H1 (cell line): ENCODE measurements at regions of chr22 and their contacts with region 1.

Region 1: DNA sequence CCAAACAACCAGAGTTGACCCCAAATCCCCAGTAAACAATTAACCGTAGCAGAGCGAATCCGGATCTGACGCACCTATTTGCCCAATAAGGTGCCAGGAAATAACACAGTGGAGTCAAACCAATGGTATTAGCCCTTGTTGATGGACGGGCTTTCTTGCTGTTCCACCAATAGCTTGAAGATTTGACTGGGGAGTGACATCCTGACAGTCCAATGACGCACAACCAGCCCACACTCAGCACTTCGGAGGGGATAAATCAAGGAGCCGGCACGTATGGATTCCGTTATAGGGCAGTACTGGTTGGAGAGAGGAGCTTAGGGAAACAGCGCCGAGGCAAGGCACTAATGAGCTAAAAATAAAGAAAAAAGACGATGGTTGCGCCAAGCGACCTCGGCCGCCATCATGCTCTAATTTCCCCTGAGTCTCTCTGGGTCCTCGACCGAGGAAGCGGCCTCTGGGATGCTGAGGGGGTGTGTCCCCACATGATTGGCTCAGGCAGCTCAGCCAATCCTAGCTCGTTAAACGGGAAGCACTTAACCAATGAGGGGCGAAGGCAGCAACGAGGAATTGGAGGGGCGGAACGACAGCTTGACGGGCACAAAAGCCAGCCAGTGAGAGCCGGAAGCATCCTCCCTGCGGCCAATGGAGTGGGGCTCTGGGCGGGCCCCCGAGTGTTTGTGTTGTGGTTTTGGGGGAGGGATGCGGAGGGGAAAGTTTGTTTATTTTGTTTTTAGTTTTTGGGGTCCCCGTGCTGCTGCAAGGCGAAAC is 49.5 kb downstream of the FAM83F start:
- DNase-seq: peak; percentile 97 to 99
- H3K4me3 ChIP-seq: peak overlapping the region; percentile 68 to 93 (median 84)
- H3K27ac ChIP-seq: peak overlapping the region; percentile 94
- H3K4me1 ChIP-seq: peaks cover 0 to 7% (median 2%) of the 10 kb centered on the region in 4 experiments; a peak in 3 of 7 replicates
- H3K27me3 ChIP-seq: peaks cover 0 to 4% (median 2%) of the 10 kb centered on the region in 4 experiments; a peak in 2 of 7 replicates
- CTCF ChIP-seq: no peak; a peak in 1 of 4 replicates
- EP300 ChIP-seq: no peak
- POLR2A ChIP-seq: peak; percentile 95 to 97
- RAD21 ChIP-seq: no peak

Region 2: GRCh38 chr22:39868741-39869140 is 175.5 kb before region 1 on chr22:
- CTCF ChIA-PET with region 1: no interaction called
- POLR2A ChIA-PET with region 1: no interaction called
- DNase-seq: no peak
- H3K4me3 ChIP-seq: no peak overlapping the region
- H3K27ac ChIP-seq: no peak overlapping the region
- H3K4me1 ChIP-seq: no peaks in the 10 kb centered on the region
- H3K27me3 ChIP-seq: no peaks in the 10 kb centered on the region
- CTCF ChIP-seq: no peak
- EP300 ChIP-seq: no peak
- POLR2A ChIP-seq: no peak
- RAD21 ChIP-seq: no peak

Region 3: DNA sequence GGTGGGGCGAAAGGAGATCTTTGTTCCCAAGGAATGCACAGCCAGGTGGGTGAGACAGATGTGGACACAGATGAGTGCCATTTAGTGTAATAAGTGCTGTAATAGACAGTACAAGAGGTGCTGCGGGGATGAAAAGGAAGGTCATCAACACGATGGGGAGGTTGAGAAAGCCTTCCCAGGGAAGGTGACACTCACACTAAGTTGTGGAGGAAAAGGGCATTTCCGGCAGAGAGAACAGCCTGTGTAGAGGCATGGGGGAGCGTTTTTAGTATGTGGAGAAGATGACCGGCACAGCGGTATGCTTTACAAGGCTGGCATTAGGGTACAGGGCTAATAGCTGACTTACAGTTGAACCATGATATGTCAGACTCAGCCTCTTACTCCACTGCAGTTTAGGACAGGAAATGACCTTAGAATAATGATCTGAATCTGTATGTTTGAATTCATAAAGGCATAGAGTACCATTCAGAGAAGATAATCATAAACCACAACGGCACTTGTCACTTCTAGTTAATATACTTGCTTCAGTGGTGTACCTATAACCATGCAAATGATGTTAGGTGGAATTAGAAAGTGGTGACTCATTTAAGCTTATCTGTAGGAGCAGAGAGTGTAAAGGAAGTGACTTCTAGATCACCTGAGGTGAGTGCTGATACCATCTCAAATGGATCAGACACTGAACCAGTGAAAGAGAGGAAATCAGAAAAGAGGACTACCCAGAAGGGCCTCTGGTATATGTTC is 11.0 kb after region 1 on chr22:
- CTCF ChIA-PET with region 1: interaction called, 3 read pairs
- POLR2A ChIA-PET with region 1: interaction called, 29 read pairs
- DNase-seq: no peak
- H3K4me3 ChIP-seq: no peak overlapping the region
- H3K27ac ChIP-seq: no peak overlapping the region
- H3K4me1 ChIP-seq: peaks cover 5 to 24% (median 10%) of the 10 kb centered on the region in 4 experiments
- H3K27me3 ChIP-seq: no peaks in the 10 kb centered on the region
- CTCF ChIP-seq: no peak
- EP300 ChIP-seq: no peak
- POLR2A ChIP-seq: no peak
- RAD21 ChIP-seq: no peak

Region 4: GRCh38 chr22:40128989-40129388 is 84.7 kb after region 1 on chr22:
- CTCF ChIA-PET with region 1: no interaction called
- POLR2A ChIA-PET with region 1: no interaction called
- DNase-seq: no peak
- H3K4me3 ChIP-seq: no peak overlapping the region
- H3K27ac ChIP-seq: no peak overlapping the region; the same call in 1 of the 2 replicates
- H3K4me1 ChIP-seq: no peaks in the 10 kb centered on the region; a peak in 1 of 7 replicates
- H3K27me3 ChIP-seq: no peaks in the 10 kb centered on the region
- CTCF ChIP-seq: no peak
- EP300 ChIP-seq: no peak
- POLR2A ChIP-seq: no peak
- RAD21 ChIP-seq: no peak

Region 5: GRCh38 chr22:40156001-40156516 is 111.8 kb after region 1 on chr22:
- CTCF ChIA-PET with region 1: no interaction called
- POLR2A ChIA-PET with region 1: no interaction called
- DNase-seq: peak; percentile 19 to 51
- H3K4me3 ChIP-seq: no peak overlapping the region
- H3K27ac ChIP-seq: no peak overlapping the region
- H3K4me1 ChIP-seq: 0 out of 7 replicates have a peak, but pooled peaks cover 0 to 4% (median 0%) of the 10 kb centered on the region in 4 experiments
- H3K27me3 ChIP-seq: no peaks in the 10 kb centered on the region
- CTCF ChIP-seq: peak in 2 of 3 experiments; percentile 28 to 51; a peak in 1 of 4 replicates
- EP300 ChIP-seq: no peak
- POLR2A ChIP-seq: no peak
- RAD21 ChIP-seq: peak; percentile 49 to 60

Region 6: GRCh38 chr22:40177738-40178416 is 133.6 kb after region 1 on chr22 and contains the start of gene TNRC6B:
- CTCF ChIA-PET with region 1: no interaction called
- POLR2A ChIA-PET with region 1: interaction called, 14 read pairs
- DNase-seq: peak; percentile 65 to 75
- H3K4me3 ChIP-seq: peak within 1 kb of the TSS; percentile 71 to 95 (median 86)
- H3K27ac ChIP-seq: peak within 1 kb of the TSS; percentile 88
- H3K4me1 ChIP-seq: peaks cover 2 to 16% (median 9%) of the 10 kb centered on the region in 4 experiments; a peak in 6 of 7 replicates
- H3K27me3 ChIP-seq: no peaks in the 10 kb centered on the region
- CTCF ChIP-seq: no peak
- EP300 ChIP-seq: 0 out of 3 replicates have a peak, but pooled peaks of 1 of the 2 experiments have one; percentile 80
- POLR2A ChIP-seq: peak; percentile 97 to 99
- RAD21 ChIP-seq: no peak
- total RNA-seq, gene TNRC6B: 45.5 and 48.9 TPM in 2 replicates